Naive thymus-derived CD4-positive, alpha-beta T cell (primary cell): ENCODE measurements at regions of chr9 and their contacts with region 1.

Region 1: DNA sequence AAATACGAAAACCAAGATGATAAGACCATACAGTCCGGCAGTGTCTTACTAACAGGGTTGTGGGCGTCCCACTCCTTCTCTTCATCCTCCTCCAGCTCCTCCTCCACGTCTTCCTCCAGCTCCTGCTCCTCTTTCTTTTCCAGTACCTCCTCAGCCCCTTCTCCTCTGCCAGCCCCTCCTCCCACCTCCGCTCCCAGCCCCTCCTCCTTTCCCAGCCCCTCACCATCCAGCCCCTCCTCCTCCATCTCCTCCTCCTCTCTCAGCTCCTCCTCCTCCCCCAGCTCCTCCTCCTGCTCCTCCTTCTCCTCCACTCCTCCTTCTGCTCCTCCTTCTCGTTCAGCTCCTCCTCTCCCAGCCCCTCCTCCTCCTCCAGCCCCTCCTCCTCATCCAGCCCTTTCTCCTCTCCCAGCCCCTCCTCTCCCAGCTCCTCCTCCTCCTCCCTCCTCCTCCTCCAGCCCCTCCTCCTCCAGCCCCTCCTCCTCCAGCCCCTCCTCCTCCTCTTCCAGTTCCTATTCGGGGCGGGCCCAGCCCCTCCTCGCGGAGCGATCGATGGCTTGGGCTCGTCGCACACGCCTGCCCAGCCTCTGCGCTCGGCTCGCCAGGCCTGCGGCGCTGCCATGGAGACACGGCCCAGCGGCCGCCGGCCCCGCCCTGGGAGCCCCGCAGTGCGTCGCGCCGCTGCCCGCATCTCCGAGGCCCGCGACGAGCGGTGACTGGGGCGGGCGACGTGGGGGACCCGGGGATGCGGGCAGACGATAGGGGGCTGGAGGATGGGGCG is at the start of gene BRD3OS:
- DNase-seq: peak; percentile 80 to 95 (median 91)
- ATAC-seq: peak; percentile 98
- H3K4me3 ChIP-seq: peak within 1 kb of the TSS; percentile 89
- H3K4me3 Mint-ChIP-seq: peak within 1 kb of the TSS; percentile 61 to 85 (median 80)
- H3K27ac ChIP-seq: peak within 1 kb of the TSS; percentile 75
- H3K27ac Mint-ChIP-seq: peak within 1 kb of the TSS; percentile 48 to 86 (median 78)
- H3K4me1 ChIP-seq: peaks cover 5 to 7% of the 10 kb centered on the region in 2 donors
- H3K4me1 Mint-ChIP-seq: peaks cover 0 to 21% (median 12%) of the 10 kb centered on the region in 7 donors
- H3K27me3 ChIP-seq: no peaks in the 10 kb centered on the region
- H3K27me3 Mint-ChIP-seq: no peaks in the 10 kb centered on the region
- total RNA-seq, gene BRD3OS: 8.3 to 19.3 (median 12.7) TPM

Region 2: GRCh38 chr9:133914442-133915342 is 110.3 kb before region 1 on chr9:
- CTCF ChIA-PET with region 1: no interaction called
- POLR2A ChIA-PET with region 1: no interaction called
- intact Hi-C with region 1: no loop called
- DNase-seq: no peak
- ATAC-seq: no peak
- H3K4me3 ChIP-seq: no peak overlapping the region
- H3K4me3 Mint-ChIP-seq: no peak overlapping the region
- H3K27ac ChIP-seq: no peak overlapping the region
- H3K27ac Mint-ChIP-seq: peak overlapping the region in 2 of 9 donors; percentile 32 to 43
- H3K4me1 ChIP-seq: no peaks in the 10 kb centered on the region
- H3K4me1 Mint-ChIP-seq: peaks cover 0 to 12% (median 8%) of the 10 kb centered on the region in 7 donors
- H3K27me3 ChIP-seq: no peaks in the 10 kb centered on the region
- H3K27me3 Mint-ChIP-seq: peaks cover 0 to 6% (median 0%) of the 10 kb centered on the region in 5 donors

Region 3: GRCh38 chr9:134099123-134099787 is 74.2 kb after region 1 on chr9:
- CTCF ChIA-PET with region 1: no interaction called
- POLR2A ChIA-PET with region 1: no interaction called
- intact Hi-C with region 1: loop called (anchors 1 kb)
- DNase-seq: peak; percentile 13 to 60 (median 55)
- ATAC-seq: peak; percentile 90
- H3K4me3 ChIP-seq: no peak overlapping the region
- H3K4me3 Mint-ChIP-seq: no peak overlapping the region
- H3K27ac ChIP-seq: no peak overlapping the region
- H3K27ac Mint-ChIP-seq: no peak overlapping the region
- H3K4me1 ChIP-seq: no peaks in the 10 kb centered on the region
- H3K4me1 Mint-ChIP-seq: peaks cover 0 to 5% (median 3%) of the 10 kb centered on the region in 7 donors
- H3K27me3 ChIP-seq: no peaks in the 10 kb centered on the region
- H3K27me3 Mint-ChIP-seq: peaks cover 2 to 23% (median 15%) of the 10 kb centered on the region in 5 donors

Region 4: DNA sequence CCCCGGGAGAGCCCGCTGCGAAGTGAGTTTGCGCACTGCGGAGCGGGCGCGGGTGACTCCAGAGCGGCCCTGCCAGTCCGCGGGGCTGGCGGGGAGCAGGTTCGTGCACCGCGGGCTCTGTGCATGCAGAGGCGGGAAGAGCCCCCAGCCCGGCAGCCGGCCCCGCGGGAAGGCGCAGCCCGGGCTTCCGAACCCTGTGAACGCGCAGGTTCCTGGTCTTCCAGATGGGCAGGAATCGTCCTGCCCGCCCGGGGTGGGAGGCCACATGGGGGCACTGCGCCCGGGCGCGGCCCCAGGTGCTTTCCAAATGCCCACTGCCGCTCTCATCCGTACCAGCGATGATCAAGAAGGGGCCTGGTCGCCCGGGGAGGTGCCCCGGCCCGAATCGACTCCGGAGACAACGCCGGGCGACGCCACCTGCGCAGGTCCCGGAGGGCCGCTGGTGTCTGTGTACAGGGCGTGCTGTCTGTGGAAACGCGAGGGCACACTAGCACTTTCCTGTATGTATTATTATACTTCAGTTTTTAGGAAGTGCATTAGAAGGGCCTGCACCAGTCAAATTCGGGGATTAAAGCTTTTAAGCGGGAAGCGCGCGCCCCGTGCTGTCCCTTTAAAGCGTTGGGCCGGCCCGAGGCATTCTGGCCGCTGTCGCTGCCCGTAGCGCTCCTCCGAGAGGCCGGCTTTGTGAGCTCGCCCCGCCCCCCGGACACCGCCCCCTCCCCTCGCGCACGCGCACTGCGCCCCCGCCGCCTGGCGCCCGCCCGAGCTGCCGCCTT is 110.5 kb after region 1 on chr9 and contains the start of gene WDR5:
- CTCF ChIA-PET with region 1: no interaction called
- POLR2A ChIA-PET with region 1: interaction called, 18 read pairs
- intact Hi-C with region 1: loop called (anchors 1 kb)
- DNase-seq: peak; percentile 85 to 97 (median 92)
- ATAC-seq: peak; percentile 96
- H3K4me3 ChIP-seq: peak within 1 kb of the TSS; percentile 94
- H3K4me3 Mint-ChIP-seq: peak within 1 kb of the TSS; percentile 88 to 98 (median 92)
- H3K27ac ChIP-seq: peak within 1 kb of the TSS; percentile 80
- H3K27ac Mint-ChIP-seq: peak within 1 kb of the TSS; percentile 84 to 93 (median 89)
- H3K4me1 ChIP-seq: peaks cover 19 to 28% of the 10 kb centered on the region in 2 donors
- H3K4me1 Mint-ChIP-seq: peaks cover 33 to 65% (median 49%) of the 10 kb centered on the region in 7 donors
- H3K27me3 ChIP-seq: no peaks in the 10 kb centered on the region
- H3K27me3 Mint-ChIP-seq: no peaks in the 10 kb centered on the region
- total RNA-seq, gene WDR5: 16.0 to 42.3 (median 30.9) TPM